ENCODE measurements at regions of chr22 and their contacts with region 1.

Region 1: DNA sequence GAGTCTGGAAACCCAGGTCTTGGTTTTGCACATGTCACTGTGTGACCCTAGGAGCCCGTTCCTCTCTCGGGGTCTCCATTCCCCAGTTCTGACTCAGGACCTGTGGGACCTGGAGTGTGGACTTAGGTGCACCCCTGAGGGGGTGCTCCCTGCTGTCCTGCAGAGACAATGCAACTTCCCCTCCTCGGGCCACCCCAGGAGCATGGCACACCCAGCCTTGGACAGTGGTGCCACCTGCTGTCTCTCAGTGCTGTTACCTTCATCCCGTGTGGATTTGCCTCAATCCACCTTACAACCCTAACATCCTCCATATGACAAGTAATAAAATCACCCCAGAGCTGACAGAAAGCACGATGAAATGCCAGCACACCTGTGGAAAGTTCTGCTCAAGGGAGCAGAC is 27.5 kb upstream of the CRYBB3 start:
- DNase-seq: peak in 6 of 9 experiments; percentile 16 to 62 (median 36)
- ATAC-seq: peak; percentile 51
- H3K4me3 ChIP-seq: no peak overlapping the region
- H3K4me3 Mint-ChIP-seq: no peak overlapping the region
- H3K27ac ChIP-seq: no peak overlapping the region
- H3K27ac Mint-ChIP-seq: no peak overlapping the region
- H3K4me1 ChIP-seq: no peaks in the 10 kb centered on the region
- H3K4me1 Mint-ChIP-seq: no peaks in the 10 kb centered on the region
- H3K27me3 ChIP-seq: no peaks in the 10 kb centered on the region
- H3K27me3 Mint-ChIP-seq: no peaks in the 10 kb centered on the region
- CTCF ChIP-seq: peak; percentile 14

Region 2: GRCh38 chr22:24926849-24927579 is 245.1 kb before region 1 on chr22:
- CTCF ChIA-PET with region 1: no interaction called
- POLR2A ChIA-PET with region 1: no interaction called
- intact Hi-C with region 1: no loop called
- DNase-seq: no peak
- ATAC-seq: no peak
- H3K4me3 ChIP-seq: no peak overlapping the region
- H3K4me3 Mint-ChIP-seq: no peak overlapping the region
- H3K27ac ChIP-seq: no peak overlapping the region
- H3K27ac Mint-ChIP-seq: no peak overlapping the region
- H3K4me1 ChIP-seq: no peaks in the 10 kb centered on the region
- H3K4me1 Mint-ChIP-seq: no peaks in the 10 kb centered on the region
- H3K27me3 ChIP-seq: no peaks in the 10 kb centered on the region
- H3K27me3 Mint-ChIP-seq: peaks cover 15% of the 10 kb centered on the region
- CTCF ChIP-seq: no peak

Region 3: GRCh38 chr22:24938741-24939341 is 233.3 kb before region 1 on chr22:
- CTCF ChIA-PET with region 1: no interaction called
- POLR2A ChIA-PET with region 1: no interaction called
- intact Hi-C with region 1: loop called (anchors 2 kb)
- DNase-seq: peak in 5 of 9 experiments; percentile 7 to 68 (median 23)
- ATAC-seq: peak; percentile 56
- H3K4me3 ChIP-seq: no peak overlapping the region
- H3K4me3 Mint-ChIP-seq: no peak overlapping the region
- H3K27ac ChIP-seq: no peak overlapping the region
- H3K27ac Mint-ChIP-seq: no peak overlapping the region
- H3K4me1 ChIP-seq: no peaks in the 10 kb centered on the region
- H3K4me1 Mint-ChIP-seq: no peaks in the 10 kb centered on the region
- H3K27me3 ChIP-seq: no peaks in the 10 kb centered on the region
- H3K27me3 Mint-ChIP-seq: peaks cover 2% of the 10 kb centered on the region
- CTCF ChIP-seq: peak; percentile 82

Region 4: GRCh38 chr22:24951942-24952836 is 220.0 kb before region 1 on chr22 and contains the start of gene KIAA1671:
- CTCF ChIA-PET with region 1: no interaction called
- POLR2A ChIA-PET with region 1: no interaction called
- intact Hi-C with region 1: loop called (anchors 2 to 5 kb)
- DNase-seq: peak; percentile 65 to 91 (median 84)
- ATAC-seq: peak; percentile 93
- H3K4me3 ChIP-seq: peak within 1 kb of the TSS; percentile 70 to 71
- H3K4me3 Mint-ChIP-seq: peak within 1 kb of the TSS; percentile 83
- H3K27ac ChIP-seq: no peak within 1 kb of the TSS
- H3K27ac Mint-ChIP-seq: no peak within 1 kb of the TSS
- H3K4me1 ChIP-seq: peaks cover 13% of the 10 kb centered on the region
- H3K4me1 Mint-ChIP-seq: peaks cover 21% of the 10 kb centered on the region
- H3K27me3 ChIP-seq: peaks cover 9% of the 10 kb centered on the region in 2 experiments
- H3K27me3 Mint-ChIP-seq: peaks cover 54% of the 10 kb centered on the region
- CTCF ChIP-seq: peak; percentile 86
- total RNA-seq, gene KIAA1671: 2.3 to 2.4 TPM

Region 5: GRCh38 chr22:25057013-25057881 is 114.9 kb before region 1 on chr22:
- CTCF ChIA-PET with region 1: interaction called, 32 read pairs
- POLR2A ChIA-PET with region 1: no interaction called
- intact Hi-C with region 1: loop called (anchors 1 kb)
- DNase-seq: peak; percentile 50 to 85 (median 77)
- ATAC-seq: peak; percentile 57
- H3K4me3 ChIP-seq: no peak overlapping the region
- H3K4me3 Mint-ChIP-seq: no peak overlapping the region
- H3K27ac ChIP-seq: no peak overlapping the region
- H3K27ac Mint-ChIP-seq: no peak overlapping the region
- H3K4me1 ChIP-seq: peaks cover 29% of the 10 kb centered on the region
- H3K4me1 Mint-ChIP-seq: peaks cover 36% of the 10 kb centered on the region
- H3K27me3 ChIP-seq: peaks cover 0 to 2% of the 10 kb centered on the region in 2 experiments
- H3K27me3 Mint-ChIP-seq: no peaks in the 10 kb centered on the region
- CTCF ChIP-seq: peak; percentile 76

Region 6: GRCh38 chr22:25081409-25081824 is 90.7 kb before region 1 on chr22:
- CTCF ChIA-PET with region 1: interaction called, 12 read pairs
- POLR2A ChIA-PET with region 1: interaction called, 3 read pairs
- intact Hi-C with region 1: loop called (anchors 1 to 2 kb)
- DNase-seq: peak in 8 of 9 experiments; percentile 17 to 75 (median 56)
- ATAC-seq: peak; percentile 75
- H3K4me3 ChIP-seq: no peak overlapping the region
- H3K4me3 Mint-ChIP-seq: no peak overlapping the region
- H3K27ac ChIP-seq: no peak overlapping the region
- H3K27ac Mint-ChIP-seq: no peak overlapping the region
- H3K4me1 ChIP-seq: peaks cover 32% of the 10 kb centered on the region
- H3K4me1 Mint-ChIP-seq: peaks cover 58% of the 10 kb centered on the region
- H3K27me3 ChIP-seq: no peaks in the 10 kb centered on the region
- H3K27me3 Mint-ChIP-seq: no peaks in the 10 kb centered on the region
- CTCF ChIP-seq: peak; percentile 67

Region 7: GRCh38 chr22:26054841-26055605 is 882.9 kb after region 1 on chr22:
- CTCF ChIA-PET with region 1: no interaction called
- POLR2A ChIA-PET with region 1: no interaction called
- intact Hi-C with region 1: no loop called
- DNase-seq: no peak
- ATAC-seq: no peak
- H3K4me3 ChIP-seq: no peak overlapping the region
- H3K4me3 Mint-ChIP-seq: no peak overlapping the region
- H3K27ac ChIP-seq: no peak overlapping the region
- H3K27ac Mint-ChIP-seq: no peak overlapping the region
- H3K4me1 ChIP-seq: no peaks in the 10 kb centered on the region
- H3K4me1 Mint-ChIP-seq: no peaks in the 10 kb centered on the region
- H3K27me3 ChIP-seq: no peaks in the 10 kb centered on the region
- H3K27me3 Mint-ChIP-seq: peaks cover 21% of the 10 kb centered on the region
- CTCF ChIP-seq: no peak

Measured in CD8-positive, alpha-beta T cell (primary cell).